Caco-2 (cell line): ENCODE measurements at regions of chr3 and their contacts with region 1.

Region 1: DNA sequence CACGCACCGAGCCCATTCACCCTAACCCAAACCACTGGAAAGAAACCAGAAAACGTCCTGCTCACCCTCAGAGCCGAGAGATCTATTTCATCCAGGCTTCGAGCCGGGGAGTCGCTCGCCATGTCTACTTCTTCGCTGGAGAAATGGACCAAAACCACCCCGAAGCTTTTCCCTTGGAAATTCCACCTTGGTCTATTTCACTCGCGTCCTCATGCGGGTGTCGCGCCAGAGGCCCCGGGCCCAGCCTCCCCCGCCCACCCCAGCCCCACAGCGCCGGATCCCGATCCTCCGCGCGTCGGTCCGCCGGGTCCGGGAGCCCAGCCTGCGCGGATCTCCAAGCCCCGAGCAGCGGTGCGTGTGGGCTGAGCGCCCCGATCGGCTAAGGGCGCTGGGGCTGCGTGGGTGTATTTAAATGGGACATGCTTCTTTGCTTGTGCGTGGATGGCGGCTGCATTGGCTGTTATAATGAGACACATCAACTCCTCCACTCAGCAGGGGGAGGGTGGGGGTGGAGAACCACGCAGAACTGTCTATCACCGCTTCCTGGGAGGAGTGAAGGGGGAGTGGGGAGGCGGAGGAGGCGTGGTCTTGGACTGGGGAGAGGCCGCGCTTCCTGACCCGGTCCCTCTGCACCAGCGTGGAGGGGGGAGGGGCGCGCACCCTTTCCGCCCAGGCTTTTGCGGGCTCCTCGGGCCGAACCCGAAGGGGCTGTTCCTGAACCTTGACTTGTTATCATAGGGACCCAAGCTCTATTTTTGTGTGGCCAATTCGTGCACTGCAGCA is at the start of gene TNIK:
- DNase-seq: peak; percentile 92 to 94
- H3K4me3 ChIP-seq: peak within 1 kb of the TSS; percentile 72
- H3K4me3 Mint-ChIP-seq: peak within 1 kb of the TSS; percentile 87
- H3K27ac Mint-ChIP-seq: peak within 1 kb of the TSS; percentile 93
- H3K4me1 ChIP-seq: peaks cover 26% of the 10 kb centered on the region
- H3K4me1 Mint-ChIP-seq: peaks cover 22% of the 10 kb centered on the region
- H3K27me3 ChIP-seq: no peaks in the 10 kb centered on the region
- H3K27me3 Mint-ChIP-seq: no peaks in the 10 kb centered on the region
- CTCF ChIP-seq: peak in 1 of 2 experiments; percentile 10
- total RNA-seq, gene TNIK: 21.4 and 22.4 TPM in 2 replicates

Region 2: GRCh38 chr3:171187706-171188290 is 272.3 kb before region 1 on chr3:
- CTCF ChIA-PET with region 1: no interaction called
- POLR2A ChIA-PET with region 1: no interaction called
- intact Hi-C with region 1: loop called (anchors 1 kb)
- DNase-seq: peak in 1 of 2 experiments; percentile 45
- H3K4me3 ChIP-seq: no peak overlapping the region
- H3K4me3 Mint-ChIP-seq: no peak overlapping the region
- H3K27ac Mint-ChIP-seq: no peak overlapping the region
- H3K4me1 ChIP-seq: peaks cover 22% of the 10 kb centered on the region
- H3K4me1 Mint-ChIP-seq: peaks cover 13% of the 10 kb centered on the region
- H3K27me3 ChIP-seq: no peaks in the 10 kb centered on the region
- H3K27me3 Mint-ChIP-seq: no peaks in the 10 kb centered on the region
- CTCF ChIP-seq: peak; percentile 59

Region 3: DNA sequence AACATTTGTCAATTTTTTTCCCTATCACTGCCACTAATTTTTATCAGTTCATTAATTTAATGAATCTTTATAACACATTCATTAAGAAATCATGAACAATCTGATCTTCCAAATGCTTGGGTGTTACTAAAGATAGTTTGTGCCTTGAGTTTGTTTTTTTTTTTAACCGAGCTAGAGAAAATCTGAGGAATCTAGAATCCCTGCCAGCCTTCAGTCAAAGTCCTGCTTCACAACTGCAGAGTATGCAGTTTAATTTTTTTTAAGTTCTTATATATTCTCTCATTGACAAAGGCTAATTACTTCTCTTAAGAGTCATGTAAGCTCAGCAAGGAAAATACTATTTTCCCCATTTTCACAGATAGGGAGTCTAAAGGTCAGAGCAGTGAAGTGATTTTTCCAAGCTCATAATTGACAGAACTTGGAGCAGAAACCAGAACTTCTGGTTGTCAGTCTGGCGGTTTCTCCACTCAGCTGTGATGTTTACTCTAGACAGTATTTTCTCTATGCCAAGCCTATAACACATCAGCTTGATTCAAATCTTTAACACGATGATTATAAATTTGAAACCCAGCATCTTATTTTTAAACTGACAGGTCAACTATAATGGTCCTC is 55.7 kb before region 1 on chr3:
- CTCF ChIA-PET with region 1: interaction called, 11 read pairs
- POLR2A ChIA-PET with region 1: no interaction called
- intact Hi-C with region 1: no loop called
- DNase-seq: peak in 1 of 2 experiments; percentile 33
- H3K4me3 ChIP-seq: no peak overlapping the region
- H3K4me3 Mint-ChIP-seq: no peak overlapping the region
- H3K27ac Mint-ChIP-seq: no peak overlapping the region
- H3K4me1 ChIP-seq: peaks cover 16% of the 10 kb centered on the region
- H3K4me1 Mint-ChIP-seq: peaks cover 19% of the 10 kb centered on the region
- H3K27me3 ChIP-seq: no peaks in the 10 kb centered on the region
- H3K27me3 Mint-ChIP-seq: no peaks in the 10 kb centered on the region
- CTCF ChIP-seq: no peak

Region 4: DNA sequence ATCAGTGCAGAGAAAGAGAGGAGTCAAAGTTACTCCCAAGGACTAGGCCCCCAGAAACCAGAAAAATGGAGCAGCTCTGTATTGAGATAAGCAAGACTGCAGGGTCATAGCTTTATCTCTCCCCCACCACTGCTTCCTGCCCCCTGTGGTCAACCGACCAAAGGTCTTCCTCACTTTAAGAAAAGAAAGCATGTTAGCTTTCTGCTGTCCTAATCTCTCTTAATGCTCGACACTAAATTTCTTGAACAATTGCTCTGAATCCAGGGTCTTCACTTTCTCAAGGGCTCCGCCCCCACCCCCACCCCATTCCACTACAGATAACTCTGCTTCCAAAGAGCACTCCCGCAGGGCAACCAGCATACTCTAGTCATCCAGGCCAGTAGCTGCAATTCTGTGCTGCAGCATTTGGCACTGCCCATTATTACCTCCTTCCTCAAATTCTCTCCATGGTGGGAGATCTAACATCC is 31.8 kb before region 1 on chr3:
- CTCF ChIA-PET with region 1: interaction called, 8 read pairs
- POLR2A ChIA-PET with region 1: no interaction called
- intact Hi-C with region 1: loop called (anchors 2 kb)
- DNase-seq: peak; percentile 24 to 59
- H3K4me3 ChIP-seq: no peak overlapping the region
- H3K4me3 Mint-ChIP-seq: no peak overlapping the region
- H3K27ac Mint-ChIP-seq: no peak overlapping the region
- H3K4me1 ChIP-seq: peaks cover 36% of the 10 kb centered on the region
- H3K4me1 Mint-ChIP-seq: no peaks in the 10 kb centered on the region
- H3K27me3 ChIP-seq: no peaks in the 10 kb centered on the region
- H3K27me3 Mint-ChIP-seq: no peaks in the 10 kb centered on the region
- CTCF ChIP-seq: no peak

Region 5: DNA sequence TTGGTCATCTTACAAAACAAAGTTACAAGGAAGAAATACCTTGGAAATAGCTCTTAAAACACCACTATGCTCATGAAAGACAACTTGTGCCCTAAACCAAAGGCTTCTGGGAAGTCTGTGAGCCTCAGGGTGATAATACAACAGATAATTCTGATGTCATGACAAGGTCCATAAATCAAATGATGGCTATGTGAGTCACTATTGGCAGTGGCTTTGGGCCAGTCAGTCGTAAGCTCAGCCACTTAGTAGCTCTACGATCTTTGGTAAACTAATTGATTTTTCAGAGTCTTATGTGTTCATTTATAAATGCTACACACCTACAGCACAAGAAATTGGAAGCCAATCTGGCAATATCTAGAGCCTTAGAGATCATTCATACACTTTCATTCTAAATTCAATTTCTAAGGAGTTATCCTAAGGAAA is 12.8 kb before region 1 on chr3:
- CTCF ChIA-PET with region 1: interaction called, 4 read pairs
- POLR2A ChIA-PET with region 1: no interaction called
- intact Hi-C with region 1: loop called (anchors 2 kb)
- DNase-seq: no peak
- H3K4me3 ChIP-seq: no peak overlapping the region
- H3K4me3 Mint-ChIP-seq: no peak overlapping the region
- H3K27ac Mint-ChIP-seq: no peak overlapping the region
- H3K4me1 ChIP-seq: no peaks in the 10 kb centered on the region; the same call in 1 of the 2 replicates
- H3K4me1 Mint-ChIP-seq: no peaks in the 10 kb centered on the region
- H3K27me3 ChIP-seq: no peaks in the 10 kb centered on the region
- H3K27me3 Mint-ChIP-seq: no peaks in the 10 kb centered on the region
- CTCF ChIP-seq: no peak

Region 6: DNA sequence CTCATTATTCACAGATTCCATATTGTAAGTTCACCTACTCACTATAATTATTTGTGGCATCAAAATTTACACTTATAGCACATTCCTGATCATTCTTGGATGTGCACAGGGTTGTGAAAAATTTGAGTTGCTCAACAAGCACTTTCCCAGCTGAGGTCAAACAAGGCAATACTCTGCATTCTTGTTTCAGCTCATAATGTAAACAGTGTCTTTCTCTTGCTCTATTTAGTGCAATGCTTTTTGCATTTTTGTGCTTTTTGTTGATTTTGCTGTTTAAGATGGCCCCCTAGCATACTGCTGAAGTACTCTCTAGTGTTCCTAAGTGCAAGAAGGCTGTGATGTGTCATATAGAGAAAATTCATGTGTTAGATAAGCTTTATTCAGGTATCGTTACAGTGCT is 66.7 kb after region 1 on chr3:
- CTCF ChIA-PET with region 1: interaction called, 3 read pairs
- POLR2A ChIA-PET with region 1: interaction called, 11 read pairs
- intact Hi-C with region 1: loop called (anchors 5 kb)
- DNase-seq: peak in 1 of 2 experiments; percentile 28
- H3K4me3 ChIP-seq: no peak overlapping the region
- H3K4me3 Mint-ChIP-seq: no peak overlapping the region
- H3K27ac Mint-ChIP-seq: peak overlapping the region; percentile 23
- H3K4me1 ChIP-seq: peaks cover 19% of the 10 kb centered on the region
- H3K4me1 Mint-ChIP-seq: peaks cover 31% of the 10 kb centered on the region
- H3K27me3 ChIP-seq: no peaks in the 10 kb centered on the region
- H3K27me3 Mint-ChIP-seq: no peaks in the 10 kb centered on the region
- CTCF ChIP-seq: no peak

Region 7: GRCh38 chr3:171566803-171567422 is 106.8 kb after region 1 on chr3:
- CTCF ChIA-PET with region 1: no interaction called
- POLR2A ChIA-PET with region 1: no interaction called
- intact Hi-C with region 1: loop called (anchors 5 kb)
- DNase-seq: peak in 1 of 2 experiments; percentile 39
- H3K4me3 ChIP-seq: no peak overlapping the region
- H3K4me3 Mint-ChIP-seq: no peak overlapping the region
- H3K27ac Mint-ChIP-seq: no peak overlapping the region
- H3K4me1 ChIP-seq: peaks cover 10% of the 10 kb centered on the region
- H3K4me1 Mint-ChIP-seq: no peaks in the 10 kb centered on the region
- H3K27me3 ChIP-seq: no peaks in the 10 kb centered on the region
- H3K27me3 Mint-ChIP-seq: no peaks in the 10 kb centered on the region
- CTCF ChIP-seq: peak; percentile 70 to 74